MCF 10A (cell line): ENCODE measurements at regions of chr3 and their contacts with region 1.

Region 1: DNA sequence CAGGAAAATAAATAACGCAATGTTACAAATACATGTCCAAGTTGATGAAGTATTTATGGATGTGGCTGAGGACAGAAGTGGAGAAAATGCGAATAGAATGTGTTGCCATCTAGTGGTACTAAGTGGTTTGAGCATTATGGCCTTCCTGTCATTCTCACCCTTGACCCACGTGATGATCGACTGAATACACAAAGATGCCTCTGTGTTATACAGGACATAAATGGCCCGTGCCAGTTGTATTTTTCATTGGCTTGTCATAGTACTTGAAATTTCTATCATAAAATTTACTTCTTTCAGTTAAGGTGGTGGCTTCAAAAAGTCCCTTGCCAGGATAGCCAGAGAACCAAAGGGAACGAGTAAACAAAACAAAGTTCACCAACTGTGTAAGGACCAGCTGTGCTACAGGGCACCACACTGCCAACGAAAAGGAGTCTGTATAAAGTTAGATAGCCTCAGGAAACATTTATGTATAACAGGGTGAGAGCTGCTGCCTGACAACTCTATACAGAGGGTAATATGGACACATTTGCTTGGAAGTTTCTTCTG is 103.7 kb downstream of the MYH15 start:
- DNase-seq: peak; percentile 59
- H3K4me3 Mint-ChIP-seq: no peak overlapping the region
- H3K27ac Mint-ChIP-seq: no peak overlapping the region
- H3K4me1 Mint-ChIP-seq: peaks cover 5% of the 10 kb centered on the region
- H3K27me3 Mint-ChIP-seq: no peaks in the 10 kb centered on the region
- CTCF ChIP-seq: peak; percentile 38

Region 2: GRCh38 chr3:107753480-107753879 is 653.3 kb before region 1 on chr3:
- CTCF ChIA-PET with region 1: no interaction called
- POLR2A ChIA-PET with region 1: no interaction called
- intact Hi-C with region 1: loop called (anchors 2 kb)
- DNase-seq: peak; percentile 63
- H3K4me3 Mint-ChIP-seq: no peak overlapping the region
- H3K27ac Mint-ChIP-seq: no peak overlapping the region
- H3K4me1 Mint-ChIP-seq: peaks cover 6% of the 10 kb centered on the region
- H3K27me3 Mint-ChIP-seq: no peaks in the 10 kb centered on the region
- CTCF ChIP-seq: peak; percentile 40

Region 3: DNA sequence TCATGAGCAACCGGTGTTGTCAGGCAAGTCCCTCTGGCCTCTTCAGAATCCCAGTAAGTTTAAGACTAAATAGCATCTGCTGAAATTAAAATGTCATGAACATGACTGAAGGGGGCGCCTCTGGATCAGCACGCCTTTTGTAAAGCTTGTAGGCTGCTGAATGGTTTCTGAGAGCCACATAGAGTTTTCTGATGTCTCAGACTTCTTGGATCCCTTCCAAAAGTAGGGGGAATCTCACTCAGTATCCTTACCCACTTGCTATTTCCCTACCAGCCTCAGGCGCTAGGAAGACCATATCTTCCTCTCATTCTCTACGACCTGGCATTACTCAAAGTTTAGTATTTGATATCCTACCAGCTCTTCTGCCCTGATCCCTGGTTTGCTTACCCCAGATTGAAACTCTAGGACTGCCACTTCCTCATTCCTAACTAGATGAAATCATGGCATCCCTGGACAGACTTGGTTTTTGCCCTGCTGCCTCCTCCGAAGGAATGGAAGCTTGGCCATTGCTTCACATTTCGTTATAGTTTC is 253.2 kb before region 1 on chr3:
- CTCF ChIA-PET with region 1: interaction called, 6 read pairs
- POLR2A ChIA-PET with region 1: interaction called, 3 read pairs
- intact Hi-C with region 1: loop called (anchors 2 kb)
- DNase-seq: peak; percentile 78
- H3K4me3 Mint-ChIP-seq: no peak overlapping the region
- H3K27ac Mint-ChIP-seq: no peak overlapping the region
- H3K4me1 Mint-ChIP-seq: no peaks in the 10 kb centered on the region
- H3K27me3 Mint-ChIP-seq: no peaks in the 10 kb centered on the region
- CTCF ChIP-seq: peak; percentile 39

Region 4: GRCh38 chr3:108391917-108392593 is 14.7 kb before region 1 on chr3:
- CTCF ChIA-PET with region 1: interaction called, 13 read pairs
- POLR2A ChIA-PET with region 1: no interaction called
- intact Hi-C with region 1: no loop called
- DNase-seq: peak; percentile 75
- H3K4me3 Mint-ChIP-seq: no peak overlapping the region
- H3K27ac Mint-ChIP-seq: peak overlapping the region; percentile 63
- H3K4me1 Mint-ChIP-seq: peaks cover 12% of the 10 kb centered on the region
- H3K27me3 Mint-ChIP-seq: no peaks in the 10 kb centered on the region
- CTCF ChIP-seq: no peak

Region 5: DNA sequence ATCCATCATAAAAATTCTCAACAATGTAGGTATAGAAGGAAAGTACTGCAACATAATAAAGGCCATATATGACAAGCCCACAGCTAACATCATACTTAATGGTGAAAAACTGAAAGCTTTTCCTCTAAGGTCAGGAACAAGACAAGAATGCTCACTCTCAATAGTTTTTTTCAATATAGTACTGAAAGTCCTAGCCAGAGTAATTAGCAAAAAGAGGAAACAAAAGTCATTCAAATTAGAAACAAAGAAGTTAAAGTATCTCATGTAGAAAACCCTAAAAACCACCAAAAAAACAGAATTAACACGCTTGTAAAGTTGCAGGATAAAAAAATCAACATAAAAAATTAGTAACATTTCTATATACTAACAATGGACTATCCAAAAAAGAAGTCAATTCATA is 41.9 kb after region 1 on chr3:
- CTCF ChIA-PET with region 1: no interaction called
- POLR2A ChIA-PET with region 1: no interaction called
- intact Hi-C with region 1: no loop called
- DNase-seq: no peak
- H3K4me3 Mint-ChIP-seq: no peak overlapping the region
- H3K27ac Mint-ChIP-seq: no peak overlapping the region
- H3K4me1 Mint-ChIP-seq: no peaks in the 10 kb centered on the region
- H3K27me3 Mint-ChIP-seq: no peaks in the 10 kb centered on the region
- CTCF ChIP-seq: no peak